Naive thymus-derived CD4-positive, alpha-beta T cell (primary cell): ENCODE measurements at regions of chr2 and their contacts with region 1.

Region 1: DNA sequence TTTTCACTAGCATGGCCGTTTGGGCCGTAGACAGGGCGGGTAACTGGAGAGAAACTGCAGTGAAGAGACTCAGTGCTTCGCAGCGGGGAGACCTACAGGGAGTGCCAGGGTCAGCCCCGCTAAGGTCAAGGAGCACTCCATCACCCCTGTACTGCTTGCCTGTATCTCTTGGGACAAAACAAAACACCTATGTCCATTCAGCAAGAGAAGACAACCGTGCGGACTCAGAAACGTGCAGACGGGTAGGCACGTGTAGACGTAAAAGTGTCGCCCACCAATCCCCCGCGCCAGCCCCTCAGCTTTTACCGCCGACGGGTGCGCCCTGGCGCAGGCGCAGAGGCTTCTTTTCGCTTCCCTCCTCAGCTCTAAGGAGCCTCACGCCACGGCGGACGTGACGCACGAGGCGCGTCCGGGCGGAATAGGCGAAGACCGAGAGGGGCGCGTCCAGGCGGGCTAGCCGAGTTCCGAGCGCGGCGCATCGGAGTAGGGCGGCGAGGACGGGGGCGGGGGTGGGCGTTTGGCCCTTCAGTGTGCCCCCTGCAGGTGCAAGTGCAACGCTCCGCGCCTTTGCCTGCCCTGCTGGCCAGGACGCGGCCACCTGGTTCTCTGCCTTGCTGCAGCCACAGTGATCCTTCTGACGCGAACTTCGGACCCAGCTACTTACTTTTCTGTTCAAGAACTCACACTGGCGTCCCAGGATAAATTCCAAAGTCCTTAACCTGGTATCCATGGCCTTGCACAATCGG is 3.3 kb upstream of the SOS1 start:
- DNase-seq: peak; percentile 89 to 97 (median 93)
- ATAC-seq: peak; percentile 89
- H3K4me3 ChIP-seq: peak overlapping the region; percentile 98
- H3K4me3 Mint-ChIP-seq: peak overlapping the region; percentile 88 to 99 (median 92)
- H3K27ac ChIP-seq: peak overlapping the region; percentile 92
- H3K27ac Mint-ChIP-seq: peak overlapping the region; percentile 92 to 99 (median 95)
- H3K4me1 ChIP-seq: peaks cover 38% of the 10 kb centered on the region in 2 donors
- H3K4me1 Mint-ChIP-seq: peaks cover 12 to 68% (median 62%) of the 10 kb centered on the region in 7 donors
- H3K27me3 ChIP-seq: no peaks in the 10 kb centered on the region
- H3K27me3 Mint-ChIP-seq: no peaks in the 10 kb centered on the region

Region 2: DNA sequence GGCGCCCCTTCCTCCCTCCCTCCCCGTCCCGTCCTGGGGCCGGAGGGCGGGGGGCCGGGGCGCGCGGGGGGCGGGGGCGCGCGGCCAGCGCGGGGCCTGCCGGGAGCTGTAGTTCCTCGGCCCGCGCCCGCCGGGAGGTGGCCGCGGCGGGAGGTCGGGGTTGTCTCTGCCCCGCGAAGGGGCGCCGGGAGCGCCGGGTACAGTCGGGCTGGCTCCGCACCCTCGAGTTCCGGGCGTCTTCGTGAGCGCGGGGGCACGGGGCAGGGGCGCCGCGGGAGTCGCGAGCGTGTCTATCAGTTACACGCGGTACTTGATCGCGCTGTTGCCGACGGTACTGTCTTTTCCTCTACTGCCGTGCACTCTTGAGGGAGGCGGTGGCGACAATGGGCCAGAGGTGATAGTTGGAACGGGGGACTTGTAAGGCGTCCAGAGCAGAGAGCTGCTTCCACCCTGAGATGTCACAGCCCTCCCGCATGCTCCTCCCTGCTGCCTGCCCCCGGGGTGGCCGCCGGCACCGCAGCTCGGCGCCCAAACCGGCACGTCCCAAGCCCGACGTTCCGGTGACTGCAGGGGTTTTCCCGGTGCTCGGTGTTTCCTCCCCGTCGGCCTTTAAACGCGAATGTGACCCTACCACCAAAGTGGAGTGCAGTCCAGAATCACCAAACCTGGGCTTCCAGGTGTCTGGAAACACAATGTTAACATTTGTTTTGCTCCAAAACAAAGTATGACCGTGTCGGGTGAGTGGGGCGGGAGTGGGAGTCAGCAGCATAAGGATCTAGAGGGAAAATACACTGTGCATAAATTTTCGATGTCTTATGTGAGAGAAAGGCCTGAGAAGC is 1799.2 kb before region 1 on chr2 and contains the start of gene PRKD3:
- CTCF ChIA-PET with region 1: no interaction called
- POLR2A ChIA-PET with region 1: no interaction called
- intact Hi-C with region 1: loop called in 1 of 2 experiments (anchors 10 kb)
- DNase-seq: peak; percentile 46 to 72 (median 65)
- ATAC-seq: peak; percentile 88
- H3K4me3 ChIP-seq: peak within 1 kb of the TSS; percentile 75
- H3K4me3 Mint-ChIP-seq: peak within 1 kb of the TSS; percentile 95 to 99 (median 98)
- H3K27ac ChIP-seq: peak within 1 kb of the TSS; percentile 73
- H3K27ac Mint-ChIP-seq: peak within 1 kb of the TSS; percentile 92 to 98 (median 95)
- H3K4me1 ChIP-seq: peaks cover 30 to 31% of the 10 kb centered on the region in 2 donors
- H3K4me1 Mint-ChIP-seq: peaks cover 18 to 48% (median 36%) of the 10 kb centered on the region in 7 donors
- H3K27me3 ChIP-seq: no peaks in the 10 kb centered on the region
- H3K27me3 Mint-ChIP-seq: peaks cover 0 to 56% (median 21%) of the 10 kb centered on the region in 5 donors
- total RNA-seq, gene PRKD3: 12.8 to 47.3 (median 46.4) TPM

Region 3: DNA sequence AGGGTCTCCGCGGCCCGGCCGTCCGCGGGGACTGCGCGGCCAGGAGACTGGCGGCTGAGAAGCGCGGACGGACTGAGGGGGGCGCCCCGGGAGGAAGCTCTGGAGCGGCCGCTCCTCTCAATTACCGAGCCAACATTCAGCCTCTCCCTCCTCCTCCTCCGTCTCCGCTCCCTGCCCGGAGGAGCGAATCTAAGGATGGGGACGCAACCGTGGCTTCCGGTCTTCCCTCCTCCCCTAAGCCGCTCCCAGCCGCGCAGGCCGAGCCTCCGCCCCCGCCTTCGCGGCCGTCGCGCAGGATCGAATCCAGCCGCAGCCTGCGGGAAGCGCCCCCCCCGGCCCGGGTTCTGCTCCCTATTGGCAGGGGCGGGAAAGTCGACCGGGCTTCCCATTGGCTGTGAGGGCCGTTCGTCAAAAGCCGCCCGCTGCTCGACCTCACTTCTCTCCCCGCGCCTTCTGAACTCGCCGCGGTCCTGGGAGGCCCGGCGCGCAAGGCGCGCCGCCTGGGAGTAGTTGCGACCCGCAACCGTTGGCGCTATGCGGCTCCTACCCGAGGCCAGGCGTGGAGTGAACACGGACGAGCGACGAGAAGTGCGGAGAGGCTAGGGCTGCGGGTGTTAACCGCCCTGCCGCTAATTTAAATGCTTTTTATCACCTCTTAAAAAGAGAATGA is 521.3 kb before region 1 on chr2 and contains the start of gene HNRNPLL:
- CTCF ChIA-PET with region 1: no interaction called
- POLR2A ChIA-PET with region 1: no interaction called
- intact Hi-C with region 1: loop called (anchors 5 kb)
- DNase-seq: peak; percentile 86 to 98 (median 91)
- ATAC-seq: peak; percentile 91
- H3K4me3 ChIP-seq: peak within 1 kb of the TSS; percentile 86
- H3K4me3 Mint-ChIP-seq: peak within 1 kb of the TSS; percentile 88 to 97 (median 95)
- H3K27ac ChIP-seq: peak within 1 kb of the TSS; percentile 72
- H3K27ac Mint-ChIP-seq: peak within 1 kb of the TSS; percentile 82 to 94 (median 90)
- H3K4me1 ChIP-seq: peaks cover 11 to 15% of the 10 kb centered on the region in 2 donors
- H3K4me1 Mint-ChIP-seq: peaks cover 29 to 57% (median 50%) of the 10 kb centered on the region in 7 donors
- H3K27me3 ChIP-seq: no peaks in the 10 kb centered on the region
- H3K27me3 Mint-ChIP-seq: no peaks in the 10 kb centered on the region
- total RNA-seq, gene HNRNPLL: 10.1 to 66.8 (median 30.2) TPM

Region 4: DNA sequence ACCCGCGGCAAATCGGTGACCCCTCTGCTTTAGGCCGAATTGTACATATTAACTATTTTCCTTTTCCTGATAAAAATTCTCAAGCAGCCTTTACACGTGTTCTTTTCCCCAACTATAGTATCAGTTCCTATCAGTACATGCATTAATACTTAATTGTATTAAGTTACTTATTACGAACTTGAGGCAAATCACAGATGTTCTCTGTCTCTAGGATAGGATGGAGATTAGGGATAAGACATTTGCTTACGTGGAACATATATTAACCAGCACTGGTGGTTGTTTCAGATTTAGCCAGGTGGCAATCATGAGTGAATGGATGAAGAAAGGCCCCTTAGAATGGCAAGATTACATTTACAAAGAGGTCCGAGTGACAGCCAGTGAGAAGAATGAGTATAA is 345.5 kb before region 1 on chr2:
- CTCF ChIA-PET with region 1: no interaction called
- POLR2A ChIA-PET with region 1: no interaction called
- intact Hi-C with region 1: loop called in 1 of 2 experiments (anchors 1 kb)
- DNase-seq: no peak
- ATAC-seq: no peak
- H3K4me3 ChIP-seq: peak overlapping the region; percentile 85
- H3K4me3 Mint-ChIP-seq: peak overlapping the region; percentile 94 to 100 (median 98)
- H3K27ac ChIP-seq: peak overlapping the region; percentile 81
- H3K27ac Mint-ChIP-seq: peak overlapping the region; percentile 92 to 99 (median 97)
- H3K4me1 ChIP-seq: peaks cover 0 to 5% of the 10 kb centered on the region in 2 donors
- H3K4me1 Mint-ChIP-seq: peaks cover 8 to 23% (median 17%) of the 10 kb centered on the region in 7 donors
- H3K27me3 ChIP-seq: no peaks in the 10 kb centered on the region
- H3K27me3 Mint-ChIP-seq: peaks cover 5 to 21% (median 17%) of the 10 kb centered on the region in 5 donors

Region 5: GRCh38 chr2:39059366-39059952 is 64.7 kb before region 1 on chr2:
- CTCF ChIA-PET with region 1: interaction called, 5 read pairs
- POLR2A ChIA-PET with region 1: interaction called, 3 read pairs
- intact Hi-C with region 1: loop called (anchors 1 to 5 kb)
- DNase-seq: peak in 7 of 9 donors; percentile 15 to 73 (median 65)
- ATAC-seq: peak; percentile 45
- H3K4me3 ChIP-seq: no peak overlapping the region
- H3K4me3 Mint-ChIP-seq: no peak overlapping the region
- H3K27ac ChIP-seq: no peak overlapping the region
- H3K27ac Mint-ChIP-seq: peak overlapping the region in 2 of 9 donors; percentile 63 to 64
- H3K4me1 ChIP-seq: no peaks in the 10 kb centered on the region
- H3K4me1 Mint-ChIP-seq: peaks cover 0 to 33% (median 0%) of the 10 kb centered on the region in 7 donors
- H3K27me3 ChIP-seq: no peaks in the 10 kb centered on the region
- H3K27me3 Mint-ChIP-seq: no peaks in the 10 kb centered on the region

Region 6: GRCh38 chr2:39135690-39136259 is 11.6 kb after region 1 on chr2:
- CTCF ChIA-PET with region 1: interaction called, 4 read pairs
- POLR2A ChIA-PET with region 1: interaction called, 58 read pairs
- intact Hi-C with region 1: loop called (anchors 1 kb)
- DNase-seq: peak in 1 of 9 donors; percentile 20
- ATAC-seq: no peak
- H3K4me3 ChIP-seq: peak overlapping the region; percentile 25
- H3K4me3 Mint-ChIP-seq: peak overlapping the region; percentile 43 to 82 (median 66)
- H3K27ac ChIP-seq: no peak overlapping the region
- H3K27ac Mint-ChIP-seq: peak overlapping the region; percentile 24 to 85 (median 78)
- H3K4me1 ChIP-seq: peaks cover 16 to 21% of the 10 kb centered on the region in 2 donors
- H3K4me1 Mint-ChIP-seq: peaks cover 16 to 78% (median 39%) of the 10 kb centered on the region in 7 donors
- H3K27me3 ChIP-seq: no peaks in the 10 kb centered on the region
- H3K27me3 Mint-ChIP-seq: no peaks in the 10 kb centered on the region

Region 7: DNA sequence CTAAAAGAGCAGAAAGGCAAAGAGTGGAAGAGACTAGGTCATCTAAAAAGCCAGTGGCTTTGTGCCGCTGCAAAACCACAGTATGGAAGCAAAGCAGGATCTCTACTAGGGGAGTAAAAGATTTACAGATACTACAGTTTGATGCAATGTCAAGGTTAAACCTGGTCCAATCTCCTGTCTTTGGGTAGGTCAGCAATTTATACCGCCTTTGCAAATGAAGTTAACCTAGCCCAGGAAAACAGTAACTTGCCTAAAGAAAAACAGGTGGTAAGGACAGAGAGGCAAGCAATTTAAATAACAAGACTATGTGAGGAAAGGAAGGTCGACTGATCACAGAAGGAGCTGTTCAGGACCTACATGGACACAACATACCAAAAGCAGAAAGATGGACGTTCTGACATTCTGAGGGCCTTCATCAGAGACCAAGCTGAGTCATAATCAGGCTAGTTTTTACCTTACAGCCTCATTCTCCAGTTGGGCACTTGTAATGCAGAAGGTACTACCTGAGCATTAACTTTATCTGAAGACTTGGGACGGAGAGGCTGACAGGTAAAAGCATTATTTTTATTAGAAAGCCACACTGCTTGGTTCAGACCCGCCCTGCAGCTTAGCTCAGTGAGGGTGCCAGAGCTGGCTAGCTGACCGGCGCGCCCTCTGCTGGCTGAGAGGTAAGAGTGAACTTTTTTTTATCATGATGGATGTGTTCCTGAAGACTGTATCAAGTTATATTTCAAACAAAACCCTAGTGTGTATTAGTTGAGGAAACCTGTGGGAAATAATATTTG is 103.6 kb after region 1 on chr2:
- CTCF ChIA-PET with region 1: interaction called, 103 read pairs
- POLR2A ChIA-PET with region 1: interaction called, 86 read pairs
- intact Hi-C with region 1: loop called (anchors 1 kb)
- DNase-seq: peak; percentile 58 to 83 (median 78)
- ATAC-seq: peak; percentile 93
- H3K4me3 ChIP-seq: peak overlapping the region; percentile 31
- H3K4me3 Mint-ChIP-seq: peak overlapping the region; percentile 49 to 85 (median 76)
- H3K27ac ChIP-seq: no peak overlapping the region
- H3K27ac Mint-ChIP-seq: peak overlapping the region in 4 of 9 donors; percentile 38 to 88 (median 65)
- H3K4me1 ChIP-seq: peaks cover 4 to 9% of the 10 kb centered on the region in 2 donors
- H3K4me1 Mint-ChIP-seq: peaks cover 8 to 43% (median 21%) of the 10 kb centered on the region in 7 donors
- H3K27me3 ChIP-seq: no peaks in the 10 kb centered on the region
- H3K27me3 Mint-ChIP-seq: peaks cover 0 to 6% (median 0%) of the 10 kb centered on the region in 5 donors